Tibial artery (tissue), 4 donors: ENCODE measurements at regions of chr15 and their contacts with region 1.

Region 1: GRCh38 chr15:25456196-25456595 is 17.4 kb upstream of the UBE3A start:
- DNase-seq: no peak
- H3K4me3 ChIP-seq: no peak overlapping the region
- H3K27ac ChIP-seq: no peak overlapping the region
- H3K4me1 ChIP-seq: no peaks in the 10 kb centered on the region
- H3K27me3 ChIP-seq: no peaks in the 10 kb centered on the region
- CTCF ChIP-seq: no peak

Region 2: DNA sequence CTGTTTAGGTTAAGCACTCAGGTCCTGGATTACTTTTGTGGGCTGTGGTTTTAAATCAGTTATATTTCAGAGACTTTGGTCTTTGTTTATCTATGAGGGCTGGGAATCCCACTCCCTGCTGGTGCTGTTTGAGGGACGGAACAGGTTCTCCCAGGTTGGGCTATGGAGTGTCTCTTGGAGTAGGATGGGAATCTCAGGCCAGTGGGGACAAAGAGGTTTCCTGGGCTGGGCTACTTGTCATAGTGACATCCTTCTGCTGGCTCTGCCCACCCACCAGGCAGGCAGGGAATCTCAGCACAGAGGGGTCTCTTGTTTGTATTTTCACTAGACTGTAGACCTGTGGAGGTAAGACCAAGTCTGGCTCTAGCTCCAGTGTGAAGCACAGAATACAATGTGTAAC is 29.9 kb after region 1 on chr15:
- intact Hi-C with region 1: no loop called
- DNase-seq: no peak
- H3K4me3 ChIP-seq: no peak overlapping the region
- H3K27ac ChIP-seq: no peak overlapping the region
- H3K4me1 ChIP-seq: peaks cover 0 to 6% (median 0%) of the 10 kb centered on the region in 4 donors
- H3K27me3 ChIP-seq: no peaks in the 10 kb centered on the region
- CTCF ChIP-seq: no peak

Region 3: DNA sequence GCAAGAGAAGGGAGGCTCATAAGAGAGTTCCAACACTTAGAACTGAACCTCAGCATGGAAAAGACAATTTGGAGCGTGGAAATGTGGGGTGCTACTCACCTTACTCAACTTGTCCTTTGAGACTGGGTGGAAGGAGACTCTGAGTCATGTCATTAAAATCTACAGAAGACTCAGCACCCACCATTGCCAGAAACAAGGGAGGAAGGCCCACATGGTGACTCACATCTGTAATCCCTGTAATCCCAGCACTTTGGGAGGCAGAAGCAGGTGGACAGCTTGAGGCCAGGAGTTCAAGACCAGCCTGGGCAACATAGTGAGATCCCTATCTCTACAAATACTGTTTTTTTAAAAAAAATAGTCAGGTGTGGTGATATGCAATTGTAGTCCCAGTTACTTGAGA is 144.6 kb after region 1 on chr15:
- intact Hi-C with region 1: loop called (anchors 5 kb)
- DNase-seq: no peak
- H3K4me3 ChIP-seq: no peak overlapping the region
- H3K27ac ChIP-seq: no peak overlapping the region
- H3K4me1 ChIP-seq: peaks cover 0 to 15% (median 0%) of the 10 kb centered on the region in 4 donors
- H3K27me3 ChIP-seq: no peaks in the 10 kb centered on the region
- CTCF ChIP-seq: no peak

Region 4: GRCh38 chr15:26504009-26504408 is 1047.8 kb after region 1 on chr15:
- intact Hi-C with region 1: no loop called
- DNase-seq: no peak
- H3K4me3 ChIP-seq: no peak overlapping the region
- H3K27ac ChIP-seq: no peak overlapping the region
- H3K4me1 ChIP-seq: no peaks in the 10 kb centered on the region
- H3K27me3 ChIP-seq: no peaks in the 10 kb centered on the region
- CTCF ChIP-seq: no peak